ENCODE measurements at regions of chr1 and their contacts with region 1.

Region 1: DNA sequence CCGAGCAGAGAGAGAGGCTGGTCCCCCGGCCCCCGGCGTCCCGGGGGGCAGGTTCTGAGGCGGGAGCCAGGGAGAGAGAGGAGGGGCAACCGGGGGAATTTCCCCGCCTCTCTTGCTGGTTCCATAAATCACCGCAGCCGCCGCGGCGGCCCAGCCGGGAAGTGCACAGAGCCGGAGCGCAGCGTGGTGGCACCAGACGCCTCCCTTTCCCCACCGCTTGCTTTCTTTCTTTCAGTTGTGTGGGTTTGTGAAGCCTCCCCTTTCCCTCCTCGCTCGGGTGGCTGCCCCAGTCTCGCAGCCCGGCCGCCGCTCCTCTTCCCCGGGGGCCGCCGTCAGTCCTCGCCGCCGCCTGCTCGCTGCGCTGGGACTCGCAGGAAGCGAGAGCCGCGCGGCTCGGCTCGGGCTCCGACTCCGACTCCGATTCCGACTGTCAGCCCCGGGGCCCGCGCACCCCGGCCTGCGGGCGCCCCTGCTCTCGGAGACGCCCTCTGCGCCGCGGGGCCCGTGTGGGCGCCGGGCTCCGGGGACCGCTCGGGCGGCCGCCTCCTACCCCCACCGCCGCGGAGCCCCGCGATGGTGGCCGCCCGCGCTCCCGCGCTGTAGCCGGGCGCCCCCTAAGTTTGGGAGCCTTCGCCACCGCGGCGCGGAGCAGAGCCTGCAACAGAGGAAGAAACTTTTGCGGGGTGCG is at the start of gene CACHD1:
- DNase-seq: no peak
- H3K4me3 ChIP-seq: peak within 1 kb of the TSS; percentile 59 to 89 (median 77)
- H3K27ac ChIP-seq: peak within 1 kb of the TSS; percentile 81 to 93 (median 84)
- H3K4me1 ChIP-seq: peaks cover 5 to 59% (median 11%) of the 10 kb centered on the region in 3 donors
- H3K27me3 ChIP-seq: peaks cover 0 to 63% (median 0%) of the 10 kb centered on the region in 4 donors
- CTCF ChIP-seq: peak; percentile 28 to 53 (median 46)
- POLR2A ChIP-seq: no peak
- total RNA-seq, gene CACHD1: 1.9 to 14.5 (median 4.1) TPM

Region 2: GRCh38 chr1:64675718-64676345 is 205.7 kb after region 1 on chr1:
- intact Hi-C with region 1: loop called (anchors 10 kb)
- DNase-seq: no peak
- H3K4me3 ChIP-seq: no peak overlapping the region
- H3K27ac ChIP-seq: no peak overlapping the region
- H3K4me1 ChIP-seq: no peaks in the 10 kb centered on the region
- H3K27me3 ChIP-seq: no peaks in the 10 kb centered on the region
- CTCF ChIP-seq: peak; percentile 19 to 63 (median 30)
- POLR2A ChIP-seq: no peak

Region 3: GRCh38 chr1:64685765-64686341 is 215.7 kb after region 1 on chr1:
- intact Hi-C with region 1: no loop called
- DNase-seq: no peak
- H3K4me3 ChIP-seq: no peak overlapping the region
- H3K27ac ChIP-seq: no peak overlapping the region
- H3K4me1 ChIP-seq: peaks cover 0 to 16% (median 7%) of the 10 kb centered on the region in 3 donors
- H3K27me3 ChIP-seq: no peaks in the 10 kb centered on the region
- CTCF ChIP-seq: no peak
- POLR2A ChIP-seq: no peak

Measured in esophagus squamous epithelium (tissue), 5 donors.